Brain microvascular endothelial cell (primary cell): ENCODE measurements at regions of chr3 and their contacts with region 1.

Region 1: GRCh38 chr3:98602078-98602678 is 8.8 kb upstream of the CPOX start:
- DNase-seq: peak; percentile 72
- H3K4me3 ChIP-seq: no peak overlapping the region
- H3K27ac ChIP-seq: no peak overlapping the region
- H3K27me3 ChIP-seq: no peaks in the 10 kb centered on the region
- CTCF ChIP-seq: peak; percentile 68

Region 2: DNA sequence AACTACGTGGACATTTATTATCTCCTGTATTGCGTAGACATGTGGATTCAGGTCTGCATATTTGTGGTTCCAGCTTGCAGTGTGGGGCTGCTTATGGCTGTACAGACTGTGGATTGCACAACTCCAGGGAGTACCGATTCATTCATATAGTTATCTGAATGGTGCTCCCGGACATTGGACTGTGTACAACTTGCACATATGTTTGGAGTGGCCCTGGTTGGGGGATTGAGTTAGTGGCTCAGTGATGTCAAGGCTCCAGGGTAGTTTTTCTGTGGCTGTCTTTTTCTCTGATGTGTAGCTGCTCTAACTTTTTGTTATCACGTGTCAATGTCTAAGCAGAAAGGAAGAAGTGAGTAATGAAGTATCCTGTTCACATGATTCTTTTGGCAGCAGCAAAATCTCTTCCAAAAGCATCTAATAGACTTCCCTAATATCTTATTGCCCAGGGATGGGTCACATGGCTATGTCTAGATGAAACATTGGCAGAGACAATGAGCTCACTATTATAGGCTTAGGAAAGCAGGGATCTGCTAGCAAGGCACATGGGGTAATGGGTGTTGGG is 176.8 kb after region 1 on chr3:
- in situ Hi-C with region 1: loop called (anchors 25 kb)
- DNase-seq: peak; percentile 98
- H3K4me3 ChIP-seq: no peak overlapping the region
- H3K27ac ChIP-seq: peak overlapping the region; percentile 97
- H3K27me3 ChIP-seq: no peaks in the 10 kb centered on the region
- CTCF ChIP-seq: no peak

Region 3: GRCh38 chr3:99023590-99024192 is 421.5 kb after region 1 on chr3:
- in situ Hi-C with region 1: loop called (anchors 25 kb)
- DNase-seq: peak; percentile 39
- H3K4me3 ChIP-seq: no peak overlapping the region
- H3K27ac ChIP-seq: no peak overlapping the region
- H3K27me3 ChIP-seq: no peaks in the 10 kb centered on the region
- CTCF ChIP-seq: peak; percentile 61